ENCODE measurements at regions of chr3 and their contacts with region 1.

Region 1: DNA sequence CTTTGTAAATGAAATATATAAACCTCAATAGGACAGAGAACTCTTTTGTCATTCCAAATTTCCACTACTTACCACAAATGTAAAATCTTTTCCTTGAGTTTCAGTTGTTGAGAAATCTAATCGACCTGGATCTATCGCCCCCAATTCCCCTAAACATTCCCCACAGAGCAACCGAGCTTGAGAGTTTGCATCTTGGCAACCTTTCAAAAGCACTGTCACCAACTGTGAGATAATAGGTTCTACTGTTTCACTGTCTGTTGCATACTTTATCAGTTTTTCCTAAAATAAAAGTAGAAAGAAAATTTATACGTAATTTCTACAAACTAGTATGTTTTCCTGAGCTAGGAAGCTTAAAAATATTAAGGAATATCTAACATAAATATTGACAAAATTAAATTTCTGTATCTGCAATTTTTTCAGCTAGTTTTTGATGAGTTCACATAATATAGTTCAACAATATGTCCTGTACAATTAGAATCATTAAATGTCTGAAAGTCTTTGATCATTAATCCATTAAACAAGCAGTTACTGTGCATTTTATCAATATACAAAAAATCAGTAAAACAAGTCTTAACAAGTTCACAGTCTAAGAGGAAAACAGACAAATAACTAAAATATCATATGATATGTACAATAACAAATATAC is 54.5 kb downstream of the ATR start:
- DNase-seq: peak; percentile 23
- ATAC-seq: no peak
- H3K4me3 ChIP-seq: no peak overlapping the region
- H3K27ac ChIP-seq: no peak overlapping the region
- H3K4me1 ChIP-seq: no peaks in the 10 kb centered on the region
- H3K27me3 ChIP-seq: no peaks in the 10 kb centered on the region
- CTCF ChIP-seq: no peak
- POLR2A ChIP-seq: no peak
- RAD21 ChIP-seq: no peak

Region 2: GRCh38 chr3:142417302-142417701 is 106.7 kb before region 1 on chr3:
- CTCF ChIA-PET with region 1: no interaction called
- POLR2A ChIA-PET with region 1: no interaction called
- dilution Hi-C with region 1: no loop called
- in situ Hi-C with region 1: no loop called
- intact Hi-C with region 1: no loop called
- DNase-seq: no peak
- ATAC-seq: no peak
- H3K4me3 ChIP-seq: no peak overlapping the region
- H3K27ac ChIP-seq: no peak overlapping the region
- H3K4me1 ChIP-seq: no peaks in the 10 kb centered on the region
- H3K27me3 ChIP-seq: no peaks in the 10 kb centered on the region
- CTCF ChIP-seq: no peak
- POLR2A ChIP-seq: no peak
- RAD21 ChIP-seq: no peak

Region 3: GRCh38 chr3:142542054-142542453 is 18.0 kb after region 1 on chr3:
- CTCF ChIA-PET with region 1: no interaction called
- POLR2A ChIA-PET with region 1: no interaction called
- dilution Hi-C with region 1: no loop called
- in situ Hi-C with region 1: no loop called
- intact Hi-C with region 1: loop called (anchors 1 kb)
- DNase-seq: no peak
- ATAC-seq: no peak
- H3K4me3 ChIP-seq: no peak overlapping the region
- H3K27ac ChIP-seq: no peak overlapping the region
- H3K4me1 ChIP-seq: no peaks in the 10 kb centered on the region
- H3K27me3 ChIP-seq: no peaks in the 10 kb centered on the region
- CTCF ChIP-seq: no peak
- POLR2A ChIP-seq: no peak
- RAD21 ChIP-seq: no peak

Region 4: DNA sequence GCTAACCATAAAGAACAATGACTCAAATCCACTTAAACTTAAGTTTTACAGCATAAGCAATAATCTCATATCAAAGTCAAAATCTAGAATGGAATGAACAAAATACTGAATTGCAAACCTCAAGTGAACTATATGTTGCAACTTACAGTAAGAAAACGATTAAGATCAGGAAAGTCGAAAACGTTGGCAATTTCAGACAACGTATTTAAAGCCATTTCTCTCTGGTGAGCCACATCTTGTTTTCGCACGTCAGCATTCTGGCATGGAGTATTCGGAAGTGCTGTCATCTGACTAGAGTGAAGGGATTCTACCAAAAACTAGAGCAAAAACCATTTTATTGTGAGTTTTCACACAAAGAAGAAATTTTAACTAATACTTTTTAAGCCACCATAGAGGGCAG is 25.9 kb after region 1 on chr3:
- CTCF ChIA-PET with region 1: no interaction called
- POLR2A ChIA-PET with region 1: interaction called, 10 read pairs
- dilution Hi-C with region 1: no loop called
- in situ Hi-C with region 1: no loop called
- intact Hi-C with region 1: no loop called
- DNase-seq: no peak
- ATAC-seq: no peak
- H3K4me3 ChIP-seq: no peak overlapping the region
- H3K27ac ChIP-seq: no peak overlapping the region
- H3K4me1 ChIP-seq: no peaks in the 10 kb centered on the region
- H3K27me3 ChIP-seq: no peaks in the 10 kb centered on the region
- CTCF ChIP-seq: no peak
- POLR2A ChIP-seq: no peak
- RAD21 ChIP-seq: no peak